Dorsolateral prefrontal cortex (tissue), 120 donors: ENCODE measurements at regions of chr1 and their contacts with region 1.

Region 1: DNA sequence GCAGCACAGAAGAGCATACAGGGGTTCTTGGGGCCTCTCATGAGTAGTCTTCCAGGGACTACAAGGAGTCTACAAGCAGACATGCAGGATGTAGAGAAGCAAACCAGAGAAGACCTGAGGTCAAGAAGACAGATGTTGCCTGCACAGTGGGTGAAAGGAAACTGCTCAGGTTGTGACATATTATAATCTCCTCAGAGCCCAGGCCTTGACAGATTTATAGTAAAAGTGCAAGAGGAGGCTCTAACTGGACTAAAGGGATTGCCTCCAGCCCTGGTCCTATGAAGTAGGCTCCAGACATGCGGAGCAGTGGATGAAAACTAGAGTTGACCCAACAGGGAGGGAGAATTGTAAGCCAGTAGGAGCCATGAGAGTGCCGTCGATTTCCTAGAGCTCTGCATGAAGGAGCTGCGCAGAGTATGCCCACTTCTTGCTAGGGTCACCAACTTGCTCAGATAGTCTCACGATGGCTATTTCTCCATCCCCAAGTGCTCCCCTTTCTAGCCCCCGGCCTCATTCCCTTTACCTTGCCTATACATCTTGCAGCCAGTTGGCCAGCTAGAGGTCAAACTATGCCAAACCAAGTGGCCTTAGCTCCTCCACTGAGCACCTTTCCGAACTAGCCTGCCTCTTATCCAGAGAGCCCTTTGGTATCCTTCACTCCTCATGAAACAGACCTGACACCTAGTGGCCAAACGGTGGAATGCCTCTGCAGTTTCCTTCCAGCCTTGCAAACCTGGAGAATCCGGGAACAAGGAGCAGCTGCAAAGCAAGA is 36.2 kb upstream of the IPO9 start:
- DNase-seq: peak; percentile 65 to 90 (median 83)
- H3K4me3 ChIP-seq: no peak overlapping the region
- H3K27ac ChIP-seq: peak overlapping the region; percentile 85 to 99 (median 96)
- H3K27me3 ChIP-seq: no peaks in the 10 kb centered on the region
- CTCF ChIP-seq: peak; percentile 88 to 99 (median 98)

Region 2: GRCh38 chr1:201559679-201560162 is 233.0 kb before region 1 on chr1:
- intact Hi-C with region 1: loop called (anchors 2 kb)
- DNase-seq: peak; percentile 81 to 92 (median 84)
- H3K4me3 ChIP-seq: peak overlapping the region in 3 of 59 donors; percentile 12 to 42 (median 21)
- H3K27ac ChIP-seq: peak overlapping the region in 44 of 59 donors; percentile 3 to 97 (median 50)
- H3K27me3 ChIP-seq: no peaks in the 10 kb centered on the region
- CTCF ChIP-seq: peak; percentile 90 to 100 (median 98)

Region 3: GRCh38 chr1:201709564-201710295 is 83.0 kb before region 1 on chr1:
- intact Hi-C with region 1: loop called (anchors 1 kb)
- DNase-seq: peak in 9 of 10 donors; percentile 44 to 87 (median 80)
- H3K4me3 ChIP-seq: no peak overlapping the region
- H3K27ac ChIP-seq: peak overlapping the region in 57 of 59 donors; percentile 15 to 100 (median 98)
- H3K27me3 ChIP-seq: no peaks in the 10 kb centered on the region
- CTCF ChIP-seq: peak; percentile 69 to 99 (median 96)